B cell (primary cell): ENCODE measurements at regions of chr13 and their contacts with region 1.

Region 1: DNA sequence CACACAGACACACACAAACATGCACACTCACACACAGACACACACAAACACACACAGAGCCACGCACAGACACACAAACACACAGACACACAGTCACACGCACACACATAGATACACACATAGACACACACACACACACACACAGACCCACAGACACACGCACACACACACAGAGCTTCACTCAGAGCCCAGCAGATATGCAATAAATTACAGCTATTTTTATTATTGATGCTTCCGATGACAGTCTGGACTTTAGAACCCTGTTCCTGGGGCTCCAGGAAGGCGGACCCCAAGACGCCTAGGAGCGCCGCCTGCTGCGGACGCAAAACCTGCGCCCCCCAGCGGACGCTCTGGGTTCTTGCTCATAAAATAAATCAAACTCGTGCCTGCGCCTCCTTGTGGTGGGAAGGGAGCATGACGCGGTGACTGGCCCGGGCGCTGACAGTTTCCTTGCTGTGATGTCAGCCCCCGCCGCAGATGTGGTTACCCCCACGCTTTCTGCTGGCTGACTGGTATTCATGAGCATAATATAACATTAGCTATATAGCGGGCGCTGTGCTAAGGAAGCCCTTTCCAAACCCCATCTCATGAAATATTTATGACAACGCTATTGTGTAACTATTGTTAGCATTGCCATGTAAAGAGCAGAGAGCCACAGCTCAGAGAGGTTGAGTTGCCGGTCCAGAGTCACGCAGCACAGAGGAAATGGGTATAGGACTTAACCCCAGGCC is 64.4 kb upstream of the TM9SF2 start:
- DNase-seq: peak; percentile 96
- ATAC-seq: peak; percentile 69
- H3K4me3 ChIP-seq: peak overlapping the region in 2 of 5 experiments; percentile 6 to 27
- H3K4me3 Mint-ChIP-seq: peak overlapping the region; percentile 76
- H3K27ac ChIP-seq: no peak overlapping the region
- H3K27ac Mint-ChIP-seq: peak overlapping the region; percentile 81
- H3K4me1 ChIP-seq: peaks cover 49 to 70% of the 10 kb centered on the region in 2 donors
- H3K4me1 Mint-ChIP-seq: peaks cover 64% of the 10 kb centered on the region
- H3K27me3 ChIP-seq: no peaks in the 10 kb centered on the region
- H3K27me3 Mint-ChIP-seq: no peaks in the 10 kb centered on the region
- CTCF ChIP-seq: peak; percentile 100

Region 2: DNA sequence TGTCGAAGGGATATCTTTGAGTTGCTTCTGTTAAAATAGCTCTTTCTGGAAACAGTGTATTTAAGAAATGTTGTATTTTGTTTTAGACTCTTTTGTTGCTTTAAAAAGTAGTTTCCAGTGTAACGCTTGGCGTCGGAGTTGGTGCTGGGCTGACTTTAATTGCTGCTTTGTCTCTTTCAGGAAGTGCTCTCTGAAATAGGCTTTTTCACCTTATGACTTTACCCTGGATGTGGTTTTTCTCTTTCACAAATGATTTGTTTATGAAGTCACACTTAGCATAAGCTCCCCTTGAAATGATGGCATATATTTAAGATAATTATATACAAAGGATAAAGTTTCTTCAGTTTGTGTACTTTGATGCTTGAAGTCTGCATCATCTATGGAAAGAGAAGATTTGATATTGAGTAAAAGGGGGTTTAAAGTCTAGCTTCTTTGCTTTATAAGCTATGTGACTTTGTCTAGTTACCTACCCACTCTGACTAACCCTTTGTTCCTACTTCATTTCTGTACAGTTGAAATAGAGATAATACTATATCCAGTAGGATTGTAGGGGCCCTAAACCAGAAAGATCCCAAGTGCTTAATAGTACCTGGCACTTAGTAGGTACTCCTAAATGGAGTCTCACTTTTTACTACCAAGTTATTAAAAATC is 178.5 kb before region 1 on chr13 and contains the start of gene GPR18:
- CTCF ChIA-PET with region 1: interaction called, 545 read pairs
- POLR2A ChIA-PET with region 1: no interaction called
- intact Hi-C with region 1: no loop called
- DNase-seq: peak; percentile 75
- ATAC-seq: peak; percentile 66
- H3K4me3 ChIP-seq: peak within 1 kb of the TSS; percentile 60 to 98 (median 79)
- H3K4me3 Mint-ChIP-seq: peak within 1 kb of the TSS; percentile 98
- H3K27ac ChIP-seq: peak within 1 kb of the TSS; percentile 86 to 90
- H3K27ac Mint-ChIP-seq: peak within 1 kb of the TSS; percentile 96
- H3K4me1 ChIP-seq: peaks cover 57 to 68% of the 10 kb centered on the region in 2 donors
- H3K4me1 Mint-ChIP-seq: peaks cover 81% of the 10 kb centered on the region
- H3K27me3 ChIP-seq: no peaks in the 10 kb centered on the region
- H3K27me3 Mint-ChIP-seq: no peaks in the 10 kb centered on the region
- CTCF ChIP-seq: no peak
- total RNA-seq, gene GPR18: 17.6 and 19.1 TPM in 2 replicates

Region 3: DNA sequence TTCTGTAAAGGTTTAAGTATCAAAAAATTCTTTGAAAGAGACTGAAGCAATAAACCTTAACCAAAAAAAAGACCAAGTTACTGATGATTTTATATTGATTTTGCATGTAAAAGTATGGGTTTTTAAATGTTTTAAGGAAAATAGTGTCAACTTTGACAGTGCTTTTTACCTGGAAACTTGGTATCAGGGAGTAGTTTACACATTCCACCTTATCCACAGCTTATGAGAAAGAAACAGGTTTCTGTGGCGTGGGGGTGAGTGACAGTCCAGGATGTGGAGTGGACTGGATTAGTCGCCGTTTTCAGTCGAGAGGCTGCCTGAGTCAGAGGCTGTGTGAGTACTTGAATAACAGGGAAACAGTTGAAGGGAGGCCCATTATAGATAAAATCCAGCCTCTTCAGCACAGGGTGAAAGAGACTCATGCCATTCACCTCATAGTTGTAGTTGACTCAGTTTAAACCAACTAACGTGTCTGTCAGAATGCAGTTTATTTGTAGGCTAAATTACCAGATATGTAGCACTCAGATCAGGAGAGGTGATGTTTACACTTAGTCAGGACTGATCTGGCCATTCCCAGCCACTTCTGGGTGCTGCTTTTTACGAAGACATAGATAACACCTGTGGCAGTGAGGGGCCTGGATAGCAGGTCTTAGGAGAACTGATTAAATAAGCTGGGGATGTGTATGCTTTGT is 129.1 kb before region 1 on chr13:
- CTCF ChIA-PET with region 1: interaction called, 96 read pairs
- POLR2A ChIA-PET with region 1: interaction called, 5 read pairs
- intact Hi-C with region 1: loop called (anchors 10 kb)
- DNase-seq: no peak
- ATAC-seq: peak; percentile 25
- H3K4me3 ChIP-seq: peak overlapping the region; percentile 37 to 97 (median 71)
- H3K4me3 Mint-ChIP-seq: peak overlapping the region; percentile 99
- H3K27ac ChIP-seq: peak overlapping the region; percentile 73 to 87
- H3K27ac Mint-ChIP-seq: peak overlapping the region; percentile 95
- H3K4me1 ChIP-seq: peaks cover 49 to 60% of the 10 kb centered on the region in 2 donors
- H3K4me1 Mint-ChIP-seq: peaks cover 69% of the 10 kb centered on the region
- H3K27me3 ChIP-seq: no peaks in the 10 kb centered on the region
- H3K27me3 Mint-ChIP-seq: no peaks in the 10 kb centered on the region
- CTCF ChIP-seq: no peak

Region 4: GRCh38 chr13:99366075-99366987 is 70.5 kb before region 1 on chr13:
- CTCF ChIA-PET with region 1: interaction called, 71 read pairs
- POLR2A ChIA-PET with region 1: no interaction called
- intact Hi-C with region 1: no loop called
- DNase-seq: peak; percentile 85
- ATAC-seq: peak; percentile 85
- H3K4me3 ChIP-seq: peak overlapping the region in 1 of 5 experiments; percentile 17
- H3K4me3 Mint-ChIP-seq: peak overlapping the region; percentile 63
- H3K27ac ChIP-seq: peak overlapping the region; percentile 19 to 29
- H3K27ac Mint-ChIP-seq: peak overlapping the region; percentile 82
- H3K4me1 ChIP-seq: peaks cover 53% of the 10 kb centered on the region in 2 donors
- H3K4me1 Mint-ChIP-seq: peaks cover 77% of the 10 kb centered on the region
- H3K27me3 ChIP-seq: no peaks in the 10 kb centered on the region
- H3K27me3 Mint-ChIP-seq: no peaks in the 10 kb centered on the region
- CTCF ChIP-seq: no peak

Region 5: DNA sequence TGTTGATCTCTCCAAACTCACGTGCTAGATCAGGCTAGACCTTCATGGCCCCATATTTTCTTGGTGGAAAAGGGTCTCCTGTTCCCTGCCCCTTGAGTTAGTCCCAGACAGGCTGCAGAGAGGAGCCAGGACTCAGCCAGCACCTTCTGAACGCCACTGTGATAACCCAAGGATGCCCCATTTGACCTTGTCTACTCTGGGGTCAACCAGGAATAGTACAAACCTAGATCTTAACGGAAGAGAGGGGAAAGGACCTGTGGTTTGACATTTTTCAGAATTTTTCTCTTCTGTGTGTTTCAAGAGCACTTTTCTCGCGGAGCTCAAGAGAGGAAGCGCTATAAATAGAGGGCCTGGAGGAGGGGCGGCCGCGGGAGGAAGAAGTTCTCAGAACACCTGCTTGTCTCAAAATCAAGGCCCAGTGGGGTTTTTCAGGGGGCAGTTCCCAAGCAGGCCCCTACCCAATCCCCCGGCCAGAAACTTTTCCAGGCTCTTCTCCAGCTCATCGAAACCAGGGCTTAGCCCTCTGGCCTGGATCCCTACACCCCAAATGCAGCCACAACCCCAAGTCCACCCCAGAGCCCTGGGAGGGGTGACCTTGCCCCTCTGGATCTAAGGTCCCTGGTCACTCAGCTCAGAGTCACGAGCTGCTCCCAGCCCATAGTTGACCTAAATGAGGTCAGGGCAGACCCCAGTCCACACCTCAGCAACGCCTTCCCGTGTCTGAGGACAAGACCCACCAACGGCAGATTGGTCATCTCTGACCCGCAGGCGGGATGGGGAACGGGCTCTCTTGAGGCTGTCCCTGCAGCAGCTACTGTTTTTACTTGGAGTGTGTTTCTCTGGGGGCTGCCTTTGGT is 11.1 kb before region 1 on chr13:
- CTCF ChIA-PET with region 1: interaction called, 93 read pairs
- POLR2A ChIA-PET with region 1: interaction called, 8 read pairs
- intact Hi-C with region 1: loop called (anchors 1 kb)
- DNase-seq: peak; percentile 80
- ATAC-seq: peak; percentile 59
- H3K4me3 ChIP-seq: peak overlapping the region in 3 of 5 experiments; percentile 21 to 58 (median 41)
- H3K4me3 Mint-ChIP-seq: peak overlapping the region; percentile 72
- H3K27ac ChIP-seq: peak overlapping the region; percentile 92 to 96
- H3K27ac Mint-ChIP-seq: peak overlapping the region; percentile 93
- H3K4me1 ChIP-seq: peaks cover 65 to 79% of the 10 kb centered on the region in 2 donors
- H3K4me1 Mint-ChIP-seq: peaks cover 71% of the 10 kb centered on the region
- H3K27me3 ChIP-seq: no peaks in the 10 kb centered on the region
- H3K27me3 Mint-ChIP-seq: no peaks in the 10 kb centered on the region
- CTCF ChIP-seq: no peak